ENCODE measurements at regions of chr5 and their contacts with region 1.

Region 1: GRCh38 chr5:138503487-138504270 is 38.4 kb downstream of the EGR1 start:
- DNase-seq: peak; percentile 70
- CTCF ChIP-seq: peak; percentile 76

Region 2: DNA sequence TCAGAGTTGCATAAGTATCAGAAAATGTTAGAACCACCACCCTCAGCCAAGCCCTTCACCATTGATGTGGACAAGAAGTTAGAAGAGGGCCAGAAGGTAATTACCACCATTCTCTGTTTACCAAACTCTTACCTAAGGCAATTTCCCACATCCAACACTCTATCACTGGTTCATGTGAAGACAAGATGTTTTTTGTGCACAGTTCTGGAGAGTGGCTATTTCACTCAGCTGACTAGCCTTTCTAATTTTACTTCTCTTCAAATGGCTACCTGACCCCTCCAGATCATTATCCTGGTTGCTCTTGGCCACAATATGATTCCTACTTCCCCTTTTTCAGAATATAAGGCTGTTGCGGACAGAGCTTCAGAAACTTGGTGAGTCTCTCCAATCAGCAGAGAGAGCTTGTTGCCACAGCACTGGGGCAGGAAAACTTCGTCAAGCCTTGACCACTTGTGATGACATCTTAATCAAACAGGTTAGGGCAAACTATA is 317.7 kb before region 1 on chr5:
- CTCF ChIA-PET with region 1: interaction called, 11 read pairs
- POLR2A ChIA-PET with region 1: no interaction called
- DNase-seq: peak; percentile 33
- CTCF ChIP-seq: no peak

Region 3: GRCh38 chr5:138464008-138464387 is 39.7 kb before region 1 on chr5:
- CTCF ChIA-PET with region 1: interaction called, 42 read pairs
- POLR2A ChIA-PET with region 1: interaction called, 9 read pairs
- DNase-seq: peak; percentile 95
- CTCF ChIP-seq: peak; percentile 68

Region 4: DNA sequence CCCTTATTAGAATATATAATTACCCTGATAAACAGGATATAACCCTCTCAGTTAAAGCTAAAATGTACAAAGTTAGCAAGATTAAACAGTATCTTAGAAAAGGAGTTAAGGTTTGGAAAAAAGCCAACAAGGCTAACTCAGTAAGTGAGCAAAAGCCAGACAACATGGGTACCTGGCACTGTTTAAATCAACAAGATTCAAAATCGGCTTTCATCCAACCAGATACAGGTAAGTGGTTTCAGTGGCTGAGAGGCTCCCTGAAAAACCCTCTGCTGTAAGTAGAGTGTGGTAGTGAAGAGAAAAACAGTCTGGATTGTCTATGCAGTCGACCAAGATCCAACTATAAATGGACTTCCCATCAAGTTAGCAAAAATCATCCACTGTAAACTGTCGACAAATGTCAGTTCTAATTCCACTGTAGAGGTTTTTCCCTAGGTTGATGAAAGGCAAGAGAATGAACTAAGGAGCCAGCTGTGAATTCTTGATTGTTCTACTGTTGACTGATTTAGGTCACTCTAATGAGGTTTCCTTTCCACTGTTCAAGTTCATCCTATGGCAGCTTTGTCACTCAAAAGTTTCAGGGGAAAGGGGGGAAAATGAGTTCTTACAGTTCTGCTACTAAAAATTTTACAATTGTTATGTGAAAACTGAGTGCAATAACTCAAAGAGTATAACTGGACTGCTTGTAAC is 12.0 kb after region 1 on chr5:
- CTCF ChIA-PET with region 1: interaction called, 53 read pairs
- POLR2A ChIA-PET with region 1: no interaction called
- DNase-seq: no peak
- CTCF ChIP-seq: no peak

Region 5: DNA sequence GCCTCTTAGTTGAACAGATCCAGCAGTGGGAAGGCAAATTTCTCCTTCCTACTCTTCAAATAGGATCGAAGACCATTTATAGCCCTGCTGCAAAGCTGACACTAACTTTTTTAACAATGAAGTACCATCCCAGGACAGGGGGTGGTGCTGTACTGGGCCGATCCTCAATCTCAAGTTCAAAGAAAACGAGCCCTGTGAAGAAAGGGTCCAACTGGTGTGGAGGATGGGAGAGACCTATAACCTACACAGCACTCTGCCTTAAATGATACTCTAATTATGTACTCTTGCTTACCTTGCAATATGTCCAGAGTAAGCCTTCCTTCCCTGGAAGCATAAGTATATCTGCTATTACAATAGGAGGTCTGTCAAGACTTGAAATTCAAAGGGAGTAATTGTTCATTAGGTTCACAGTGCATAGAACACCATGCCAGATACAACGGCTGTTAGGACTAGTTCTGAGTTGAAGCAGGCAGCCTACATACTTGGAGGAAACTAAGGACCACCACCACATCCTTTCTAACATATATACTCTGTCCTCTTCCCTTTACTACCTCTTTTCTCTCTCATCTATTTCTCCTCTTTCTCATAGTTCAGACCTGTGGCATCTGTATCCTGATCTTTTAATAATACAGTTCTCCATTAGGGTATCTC is 33.1 kb after region 1 on chr5:
- CTCF ChIA-PET with region 1: interaction called, 16 read pairs
- POLR2A ChIA-PET with region 1: no interaction called
- DNase-seq: no peak
- CTCF ChIP-seq: no peak

Region 6: DNA sequence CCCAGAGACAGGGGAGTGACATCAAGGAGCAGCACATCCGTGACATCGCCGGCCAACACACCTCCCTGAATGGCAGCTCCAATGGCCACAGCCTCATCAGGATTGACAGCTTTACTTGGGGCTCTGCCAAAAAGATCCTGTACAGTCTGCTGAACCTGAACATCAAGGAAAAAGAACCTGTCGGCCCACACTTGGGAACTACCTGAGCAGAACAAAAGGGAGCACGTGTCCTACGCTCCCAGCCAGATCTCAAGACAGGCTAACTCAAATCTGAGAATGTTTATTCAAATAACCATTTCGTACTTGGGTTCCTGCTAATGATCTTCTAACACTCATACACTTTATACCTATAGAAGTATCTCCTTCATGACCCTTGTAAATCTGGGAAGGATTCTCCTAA is 56.3 kb after region 1 on chr5:
- CTCF ChIA-PET with region 1: no interaction called
- POLR2A ChIA-PET with region 1: no interaction called
- DNase-seq: no peak
- CTCF ChIP-seq: no peak

Region 7: GRCh38 chr5:138588013-138588788 is 84.5 kb after region 1 on chr5:
- CTCF ChIA-PET with region 1: no interaction called
- POLR2A ChIA-PET with region 1: no interaction called
- DNase-seq: no peak
- CTCF ChIP-seq: no peak